ENCODE measurements at regions of chr1 and their contacts with region 1.

Region 1: DNA sequence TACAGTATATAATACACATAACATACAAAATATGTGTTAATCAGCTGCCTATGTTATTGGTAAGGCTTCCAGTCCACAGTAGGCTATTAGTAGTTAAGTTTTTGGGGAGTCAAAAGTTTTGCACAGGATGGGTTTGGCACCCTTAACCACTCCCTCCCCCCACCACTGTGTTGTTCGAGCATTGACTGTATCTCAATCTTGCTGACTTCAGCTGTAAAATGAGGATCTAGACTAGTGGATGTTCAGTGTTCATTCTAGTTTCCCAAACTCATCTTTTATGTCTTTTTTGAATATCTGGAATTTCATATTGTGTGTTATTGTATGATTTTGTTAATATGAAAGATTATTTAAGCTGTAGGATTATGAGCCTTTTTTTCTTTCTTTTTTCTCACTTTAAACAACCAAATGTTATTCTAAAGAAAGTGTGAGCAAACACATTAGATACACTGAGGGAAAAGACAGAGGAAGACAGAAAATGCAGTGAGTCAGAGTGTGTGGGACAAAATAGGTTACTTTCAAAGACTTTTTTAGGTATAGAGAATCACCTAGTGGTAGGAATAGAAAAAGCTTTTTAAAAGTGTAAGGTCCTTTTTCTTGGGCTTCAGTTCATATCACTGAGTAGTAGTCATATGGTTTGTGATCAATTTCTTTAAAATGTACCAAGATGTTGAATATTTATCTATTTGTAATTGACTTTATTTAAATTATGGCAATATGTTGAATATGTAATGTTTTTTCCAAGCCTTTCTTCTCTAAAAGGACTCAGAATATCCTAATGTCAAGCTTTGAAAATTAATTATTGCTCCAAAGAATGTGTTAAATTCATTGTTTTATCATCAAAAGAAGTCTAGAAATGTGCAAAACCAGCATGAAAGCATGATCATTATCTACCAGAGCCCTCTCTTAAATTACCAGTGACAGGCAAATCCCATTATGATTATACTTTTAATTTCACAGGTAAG is 17.9 kb upstream of the CENPF start:
- DNase-seq: no peak
- H3K4me3 Mint-ChIP-seq: no peak overlapping the region
- H3K27ac Mint-ChIP-seq: no peak overlapping the region
- H3K4me1 Mint-ChIP-seq: no peaks in the 10 kb centered on the region
- H3K27me3 Mint-ChIP-seq: peaks cover 9% of the 10 kb centered on the region

Region 2: DNA sequence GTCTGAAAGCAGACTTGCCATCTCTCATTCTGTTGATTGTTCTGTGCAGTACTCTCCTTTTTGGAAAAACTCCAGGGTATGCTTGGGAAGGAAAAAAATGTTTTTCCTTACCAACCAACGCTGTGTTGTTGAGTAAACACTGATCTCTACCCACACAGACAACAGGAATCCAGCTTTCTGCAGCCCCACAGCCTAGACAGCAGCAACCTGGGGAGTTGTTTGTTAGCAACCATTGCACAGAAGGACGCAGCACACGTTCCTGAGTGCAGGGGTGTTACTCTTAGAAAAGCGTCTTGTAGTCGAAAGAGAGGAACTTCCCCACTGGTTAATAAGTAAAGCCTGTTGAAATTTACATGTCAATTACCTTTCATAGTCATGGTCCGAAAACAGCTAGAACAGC is 247.6 kb before region 1 on chr1:
- CTCF ChIA-PET with region 1: interaction called, 252 read pairs
- DNase-seq: no peak
- H3K4me3 Mint-ChIP-seq: no peak overlapping the region
- H3K27ac Mint-ChIP-seq: no peak overlapping the region
- H3K4me1 Mint-ChIP-seq: peaks cover 9% of the 10 kb centered on the region
- H3K27me3 Mint-ChIP-seq: no peaks in the 10 kb centered on the region

Region 3: DNA sequence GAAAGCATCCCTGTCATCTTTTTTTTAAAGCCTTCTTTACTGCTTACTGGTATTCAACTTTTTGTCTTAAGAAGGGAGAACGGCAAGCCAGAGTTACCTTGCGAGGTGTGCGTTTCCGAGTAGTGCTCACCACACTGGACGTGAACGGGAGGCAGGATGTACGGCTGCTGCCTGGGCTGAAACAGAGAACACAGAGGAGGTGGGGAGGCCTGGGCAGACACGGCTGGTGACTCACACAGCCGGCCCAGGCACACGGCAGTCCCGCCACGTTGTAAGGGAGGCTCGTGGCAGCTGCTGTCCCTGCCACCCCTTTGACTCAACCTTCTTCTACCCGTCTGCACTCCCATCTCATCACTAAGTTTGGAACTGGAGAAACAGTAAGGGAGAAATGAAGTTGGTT is 198.3 kb before region 1 on chr1:
- CTCF ChIA-PET with region 1: interaction called, 43 read pairs
- DNase-seq: no peak
- H3K4me3 Mint-ChIP-seq: no peak overlapping the region
- H3K27ac Mint-ChIP-seq: no peak overlapping the region
- H3K4me1 Mint-ChIP-seq: peaks cover 5% of the 10 kb centered on the region
- H3K27me3 Mint-ChIP-seq: peaks cover 4% of the 10 kb centered on the region